Activated naive CD4-positive, alpha-beta T cell treated with anti-CD3 and anti-CD28 coated beads for 36 hours (primary cell): ENCODE measurements at regions of chr2 and their contacts with region 1.

Region 1: GRCh38 chr2:18435421-18436037 is 124.9 kb downstream of the RDH14 start:
- DNase-seq: peak; percentile 38
- H3K4me3 Mint-ChIP-seq: no peak overlapping the region
- H3K27ac Mint-ChIP-seq: no peak overlapping the region
- H3K4me1 Mint-ChIP-seq: no peaks in the 10 kb centered on the region
- H3K27me3 Mint-ChIP-seq: peaks cover 10% of the 10 kb centered on the region

Region 2: DNA sequence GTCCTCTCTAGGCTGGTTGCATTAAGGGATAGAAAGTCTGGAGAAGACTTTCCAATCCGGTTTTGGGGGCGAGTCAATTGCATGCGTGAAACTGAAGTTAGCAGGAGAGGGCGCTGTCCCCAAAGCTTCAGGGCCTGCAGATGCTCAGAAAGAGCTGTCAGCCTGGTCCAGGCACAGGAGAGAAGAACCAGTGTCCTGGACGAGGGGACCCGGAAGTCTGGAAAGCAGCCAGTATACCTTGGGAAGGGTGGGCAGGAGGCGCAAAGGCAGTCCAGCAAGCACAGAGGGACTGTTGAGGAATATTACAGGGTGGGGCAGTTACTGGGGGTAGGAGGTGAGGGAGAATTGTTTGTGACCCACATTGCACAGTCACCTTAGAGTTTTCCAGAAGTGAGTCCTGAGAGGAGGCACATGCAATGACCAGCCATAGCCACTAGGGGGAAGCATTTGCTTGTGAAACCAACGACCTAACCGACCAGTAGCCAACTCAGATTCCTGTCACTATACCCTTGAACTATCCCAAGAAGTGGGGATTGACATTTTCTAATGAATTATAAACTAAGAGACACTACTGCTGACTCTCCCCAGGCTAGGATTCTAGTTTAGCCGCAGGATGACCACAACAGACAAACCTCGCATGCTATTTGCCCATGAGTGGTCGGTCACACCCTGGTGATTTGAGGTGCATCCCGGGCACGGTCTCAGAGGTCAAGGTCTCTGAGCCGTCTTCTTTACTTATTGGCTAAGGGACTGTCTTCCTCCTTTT is 47.9 kb before region 1 on chr2:
- CTCF ChIA-PET with region 1: no interaction called
- intact Hi-C with region 1: loop called (anchors 2 kb)
- DNase-seq: peak; percentile 74
- H3K4me3 Mint-ChIP-seq: no peak overlapping the region
- H3K27ac Mint-ChIP-seq: no peak overlapping the region
- H3K4me1 Mint-ChIP-seq: no peaks in the 10 kb centered on the region
- H3K27me3 Mint-ChIP-seq: no peaks in the 10 kb centered on the region

Region 3: GRCh38 chr2:18749912-18750526 is 314.5 kb after region 1 on chr2:
- CTCF ChIA-PET with region 1: no interaction called
- intact Hi-C with region 1: loop called (anchors 10 kb)
- DNase-seq: peak; percentile 75
- H3K4me3 Mint-ChIP-seq: no peak overlapping the region
- H3K27ac Mint-ChIP-seq: no peak overlapping the region
- H3K4me1 Mint-ChIP-seq: no peaks in the 10 kb centered on the region
- H3K27me3 Mint-ChIP-seq: no peaks in the 10 kb centered on the region